GM12878 (cell line): ENCODE measurements at regions of chr1 and their contacts with region 1.

Region 1: GRCh38 chr1:107365527-107366240 is 224.8 kb downstream of the NTNG1 start:
- DNase-seq: no peak
- ATAC-seq: no peak
- H3K4me3 ChIP-seq: no peak overlapping the region
- H3K27ac ChIP-seq: no peak overlapping the region
- H3K4me1 ChIP-seq: no peaks in the 10 kb centered on the region
- H3K27me3 ChIP-seq: no peaks in the 10 kb centered on the region
- CTCF ChIP-seq: no peak
- EP300 ChIP-seq: no peak
- POLR2A ChIP-seq: no peak
- RAD21 ChIP-seq: no peak

Region 2: DNA sequence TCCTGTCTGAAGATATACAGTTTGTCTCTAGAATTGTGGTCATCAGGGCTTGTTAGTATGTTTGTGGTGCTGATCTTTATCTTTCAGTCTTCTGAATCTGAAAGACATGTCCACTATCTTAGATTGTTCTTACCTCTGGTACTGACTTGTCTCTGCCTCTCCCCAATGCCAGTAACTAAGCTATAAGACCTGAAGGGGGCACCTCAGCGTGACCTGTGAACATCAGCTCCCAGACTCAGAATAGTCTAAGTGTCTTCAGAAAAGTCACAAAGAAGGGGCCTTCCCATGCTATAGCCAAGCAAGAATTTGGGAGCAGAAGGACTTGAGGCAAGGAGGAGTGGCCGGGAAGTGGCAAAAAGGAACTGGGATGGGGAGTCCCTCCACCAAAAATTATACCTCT is 46.8 kb before region 1 on chr1:
- CTCF ChIA-PET with region 1: no interaction called
- POLR2A ChIA-PET with region 1: no interaction called
- RAD21 ChIA-PET with region 1: no interaction called
- SMC1A ChIA-PET with region 1: no interaction called
- in situ Hi-C with region 1: no loop called
- intact Hi-C with region 1: loop called (anchors 5 kb)
- DNase-seq: no peak
- ATAC-seq: peak; percentile 57; the same call in 2 of the 3 replicates
- H3K4me3 ChIP-seq: no peak overlapping the region
- H3K27ac ChIP-seq: no peak overlapping the region
- H3K4me1 ChIP-seq: no peaks in the 10 kb centered on the region
- H3K27me3 ChIP-seq: no peaks in the 10 kb centered on the region
- CTCF ChIP-seq: peak in 2 of 3 experiments; percentile 15 to 18; a peak in 1 of 6 replicates
- EP300 ChIP-seq: no peak
- POLR2A ChIP-seq: no peak
- RAD21 ChIP-seq: no peak